ENCODE measurements at regions of chr11 and their contacts with region 1.

Region 1: GRCh38 chr11:128052912-128053641 is 534.3 kb downstream of the ETS1 start:
- DNase-seq: no peak
- H3K4me3 Mint-ChIP-seq: peak overlapping the region; percentile 45
- H3K27ac Mint-ChIP-seq: peak overlapping the region; percentile 91
- H3K4me1 Mint-ChIP-seq: peaks cover 75% of the 10 kb centered on the region
- H3K27me3 Mint-ChIP-seq: no peaks in the 10 kb centered on the region

Region 2: DNA sequence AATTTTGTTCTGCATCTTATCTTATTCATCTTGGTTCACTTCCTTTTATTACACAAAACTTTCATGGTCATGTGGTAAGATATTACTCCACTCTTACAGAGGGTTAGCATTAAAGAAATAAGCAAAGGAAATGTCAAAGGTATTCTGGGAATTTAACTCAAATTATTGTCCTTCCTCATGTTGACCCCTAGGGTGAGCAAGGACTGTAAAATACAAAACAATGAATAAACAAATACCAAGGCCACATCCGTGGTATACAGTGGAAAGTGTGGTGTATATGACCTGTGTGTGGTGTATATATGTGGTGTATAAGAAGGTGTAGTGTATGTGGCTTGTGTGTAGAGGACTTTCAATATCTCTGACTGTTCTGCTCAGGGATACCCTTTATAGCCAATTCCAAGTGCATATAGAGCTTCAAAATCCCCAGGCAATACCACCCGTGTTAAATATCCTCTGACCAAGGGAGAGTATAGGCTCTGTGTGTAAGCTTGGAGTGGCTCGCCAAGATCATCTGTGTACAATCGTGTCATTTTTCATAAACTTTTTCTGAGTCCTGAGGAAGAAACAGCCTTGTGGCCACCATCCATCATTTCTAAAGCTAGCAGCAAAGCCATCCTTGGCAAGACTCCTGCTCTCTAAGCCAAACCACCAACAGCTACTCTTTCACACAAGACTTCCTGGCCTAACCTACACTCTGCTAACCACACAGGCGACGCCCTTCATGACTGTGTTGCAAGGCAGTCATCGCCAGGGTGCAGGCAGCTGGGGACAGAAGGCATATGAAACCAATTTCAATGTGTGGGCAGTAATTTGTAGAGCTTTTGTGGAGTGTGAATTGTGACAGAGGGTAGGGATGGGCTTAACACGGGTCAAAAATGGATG is 13.7 kb before region 1 on chr11:
- CTCF ChIA-PET with region 1: interaction called, 35 read pairs
- DNase-seq: peak; percentile 88
- H3K4me3 Mint-ChIP-seq: peak overlapping the region; percentile 60
- H3K27ac Mint-ChIP-seq: peak overlapping the region; percentile 96
- H3K4me1 Mint-ChIP-seq: peaks cover 49% of the 10 kb centered on the region
- H3K27me3 Mint-ChIP-seq: no peaks in the 10 kb centered on the region

Region 3: GRCh38 chr11:128342511-128343134 is 289.5 kb after region 1 on chr11:
- CTCF ChIA-PET with region 1: no interaction called
- DNase-seq: peak; percentile 75
- H3K4me3 Mint-ChIP-seq: peak overlapping the region; percentile 68
- H3K27ac Mint-ChIP-seq: peak overlapping the region; percentile 99
- H3K4me1 Mint-ChIP-seq: peaks cover 74% of the 10 kb centered on the region
- H3K27me3 Mint-ChIP-seq: no peaks in the 10 kb centered on the region